ENCODE measurements at regions of chr11 and their contacts with region 1.

Region 1: GRCh38 chr11:124070915-124071635 is 29.9 kb upstream of the OR10G7 start:
- DNase-seq: peak; percentile 58 to 89 (median 64)
- H3K4me3 ChIP-seq: no peak overlapping the region
- H3K27ac ChIP-seq: peak overlapping the region in 1 of 5 donors; percentile 29
- H3K4me1 ChIP-seq: no peaks in the 10 kb centered on the region
- H3K27me3 ChIP-seq: peaks cover 17% of the 10 kb centered on the region
- CTCF ChIP-seq: peak; percentile 57 to 83 (median 73)
- POLR2A ChIP-seq: no peak

Region 2: GRCh38 chr11:123859731-123860130 is 211.3 kb before region 1 on chr11:
- intact Hi-C with region 1: no loop called
- DNase-seq: no peak
- H3K4me3 ChIP-seq: no peak overlapping the region
- H3K27ac ChIP-seq: no peak overlapping the region
- H3K4me1 ChIP-seq: no peaks in the 10 kb centered on the region
- H3K27me3 ChIP-seq: no peaks in the 10 kb centered on the region
- CTCF ChIP-seq: no peak
- POLR2A ChIP-seq: no peak

Region 3: DNA sequence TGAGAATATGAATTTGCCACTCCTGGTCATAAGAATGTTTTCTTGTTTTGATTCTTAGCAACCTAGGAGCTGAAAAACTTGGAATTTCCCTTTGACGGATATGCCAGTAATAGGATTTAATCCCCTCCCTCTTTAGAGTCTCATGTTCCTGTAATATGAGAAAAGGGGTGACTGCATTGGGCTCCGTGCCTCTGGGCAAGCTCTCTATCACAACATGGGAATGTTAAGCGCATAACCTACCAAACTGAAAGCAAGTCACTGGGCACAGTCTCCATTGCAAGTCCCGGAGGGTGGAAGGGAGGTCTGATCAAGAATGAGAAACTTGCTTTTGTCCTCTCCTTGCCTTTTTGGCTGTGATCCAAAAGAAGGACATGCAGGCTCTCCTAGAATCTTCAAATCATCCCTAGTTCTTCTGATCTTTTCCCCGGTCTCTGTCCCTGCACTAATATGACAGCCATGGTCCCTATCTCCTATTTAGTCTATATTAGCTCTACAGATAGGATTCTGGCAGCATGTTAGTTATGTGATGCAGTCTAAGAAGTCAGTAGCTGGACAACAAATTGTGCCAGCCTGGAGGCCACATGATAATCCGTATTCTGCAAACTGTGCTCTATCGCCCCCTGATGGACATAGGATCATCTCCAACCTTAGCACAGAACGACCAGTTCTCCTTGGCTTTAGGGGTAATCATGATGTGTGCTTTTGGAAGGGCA is 123.8 kb after region 1 on chr11:
- intact Hi-C with region 1: loop called (anchors 5 to 10 kb)
- DNase-seq: peak in 6 of 7 donors; percentile 45 to 77 (median 58)
- H3K4me3 ChIP-seq: no peak overlapping the region
- H3K27ac ChIP-seq: no peak overlapping the region
- H3K4me1 ChIP-seq: no peaks in the 10 kb centered on the region
- H3K27me3 ChIP-seq: no peaks in the 10 kb centered on the region
- CTCF ChIP-seq: peak; percentile 44 to 76 (median 71)
- POLR2A ChIP-seq: no peak